ENCODE measurements at regions of chr13 and their contacts with region 1.

Region 1: GRCh38 chr13:76971851-76972829 is 19.7 kb upstream of the CLN5 start:
- DNase-seq: no peak
- H3K4me3 ChIP-seq: no peak overlapping the region
- H3K27ac ChIP-seq: no peak overlapping the region
- H3K4me1 ChIP-seq: peaks cover 23% of the 10 kb centered on the region
- H3K27me3 ChIP-seq: no peaks in the 10 kb centered on the region
- CTCF ChIP-seq: no peak

Region 2: DNA sequence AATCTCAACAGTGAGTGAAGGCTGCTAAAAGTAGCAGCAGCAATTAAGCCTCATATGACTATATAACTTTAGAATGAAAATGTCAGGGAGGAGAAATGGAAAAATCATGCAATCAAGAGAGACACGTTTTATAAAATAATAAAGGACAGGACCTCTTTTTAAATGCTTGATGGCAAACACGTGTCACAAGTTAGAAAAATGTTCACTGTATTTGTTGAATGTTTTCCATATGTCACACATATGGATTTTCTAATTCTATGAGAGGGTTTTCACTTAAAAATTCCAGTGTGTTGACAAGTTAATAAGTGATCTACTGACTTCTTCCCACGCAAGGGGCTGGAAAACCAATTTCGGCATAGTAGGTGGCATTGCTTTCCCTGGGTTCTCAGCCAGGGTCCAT is 58.2 kb before region 1 on chr13:
- CTCF ChIA-PET with region 1: no interaction called
- dilution Hi-C with region 1: loop called (anchors 5 kb)
- in situ Hi-C with region 1: no loop called
- intact Hi-C with region 1: no loop called
- DNase-seq: no peak
- H3K4me3 ChIP-seq: no peak overlapping the region
- H3K27ac ChIP-seq: no peak overlapping the region
- H3K4me1 ChIP-seq: peaks cover 13% of the 10 kb centered on the region
- H3K27me3 ChIP-seq: no peaks in the 10 kb centered on the region
- CTCF ChIP-seq: no peak

Measured in mammary epithelial cell (primary cell).